ENCODE measurements at regions of chr1 and their contacts with region 1.

Region 1: GRCh38 chr1:100921109-100921706 is 25.3 kb downstream of the SLC30A7 start:
- DNase-seq: peak; percentile 23
- H3K4me3 ChIP-seq: no peak overlapping the region
- H3K27ac ChIP-seq: peak overlapping the region; percentile 46
- H3K27me3 ChIP-seq: no peaks in the 10 kb centered on the region
- CTCF ChIP-seq: peak; percentile 34

Region 2: DNA sequence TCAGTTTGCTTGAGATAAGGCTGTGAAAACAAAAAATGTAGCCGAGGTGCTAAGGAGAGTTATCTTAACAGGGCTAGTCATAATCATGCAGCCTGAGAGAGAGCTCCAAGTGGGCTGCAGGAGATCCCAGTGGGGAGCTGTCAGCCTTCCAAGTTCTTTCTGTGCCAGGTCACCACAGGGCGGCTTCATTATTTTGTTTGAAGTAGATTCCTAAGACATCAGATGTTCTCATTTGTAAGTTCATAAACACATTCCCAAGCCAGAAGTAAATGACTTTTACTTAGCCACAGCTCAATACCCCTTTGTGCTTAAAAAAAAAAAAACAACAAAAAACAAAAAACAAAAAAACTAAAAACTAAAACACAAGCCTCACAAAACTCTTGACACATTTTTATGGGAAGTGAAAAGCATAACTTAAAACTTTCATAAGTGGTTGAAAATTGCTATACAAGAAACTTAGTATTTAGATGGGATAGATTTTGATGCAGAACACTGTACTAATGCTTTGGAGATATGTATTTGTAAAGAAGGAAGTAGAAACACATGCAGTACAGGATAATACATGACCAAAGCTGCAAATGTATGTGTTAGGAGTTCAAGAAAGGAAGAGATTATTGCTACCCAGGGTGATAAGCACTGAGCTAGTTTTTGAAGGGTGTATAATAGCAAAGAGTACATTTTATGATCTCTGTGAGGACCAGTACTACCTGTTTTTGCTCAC is 560.3 kb before region 1 on chr1:
- in situ Hi-C with region 1: no loop called
- DNase-seq: peak; percentile 66
- H3K4me3 ChIP-seq: no peak overlapping the region
- H3K27ac ChIP-seq: no peak overlapping the region
- H3K27me3 ChIP-seq: no peaks in the 10 kb centered on the region
- CTCF ChIP-seq: no peak

Region 3: DNA sequence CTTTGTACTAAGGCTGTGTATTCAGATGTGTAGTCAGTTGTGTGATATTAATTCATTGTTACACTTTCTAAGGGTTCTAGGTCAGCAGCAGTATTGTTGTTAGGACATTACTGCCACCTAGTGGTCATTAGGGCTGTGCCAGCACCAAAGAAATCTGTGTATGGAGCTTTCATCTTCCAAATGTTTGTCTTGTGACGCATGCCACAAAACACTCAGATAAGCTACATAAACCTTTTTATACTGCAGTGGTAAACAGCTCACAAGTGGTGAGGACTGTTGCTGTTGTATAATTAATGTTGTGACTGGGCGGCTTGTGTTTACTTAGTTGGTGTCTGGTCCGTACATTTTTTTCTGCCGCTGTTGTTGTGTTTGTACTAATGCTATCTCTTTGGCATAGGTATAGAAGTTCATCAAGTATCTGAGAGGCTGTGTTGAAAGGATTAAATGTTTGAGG is 367.3 kb after region 1 on chr1:
- in situ Hi-C with region 1: loop called (anchors 25 kb)
- DNase-seq: peak; percentile 95
- H3K4me3 ChIP-seq: no peak overlapping the region
- H3K27ac ChIP-seq: no peak overlapping the region
- H3K27me3 ChIP-seq: no peaks in the 10 kb centered on the region
- CTCF ChIP-seq: peak; percentile 87